Naive thymus-derived CD4-positive, alpha-beta T cell (primary cell): ENCODE measurements at regions of chr19 and their contacts with region 1.

Region 1: DNA sequence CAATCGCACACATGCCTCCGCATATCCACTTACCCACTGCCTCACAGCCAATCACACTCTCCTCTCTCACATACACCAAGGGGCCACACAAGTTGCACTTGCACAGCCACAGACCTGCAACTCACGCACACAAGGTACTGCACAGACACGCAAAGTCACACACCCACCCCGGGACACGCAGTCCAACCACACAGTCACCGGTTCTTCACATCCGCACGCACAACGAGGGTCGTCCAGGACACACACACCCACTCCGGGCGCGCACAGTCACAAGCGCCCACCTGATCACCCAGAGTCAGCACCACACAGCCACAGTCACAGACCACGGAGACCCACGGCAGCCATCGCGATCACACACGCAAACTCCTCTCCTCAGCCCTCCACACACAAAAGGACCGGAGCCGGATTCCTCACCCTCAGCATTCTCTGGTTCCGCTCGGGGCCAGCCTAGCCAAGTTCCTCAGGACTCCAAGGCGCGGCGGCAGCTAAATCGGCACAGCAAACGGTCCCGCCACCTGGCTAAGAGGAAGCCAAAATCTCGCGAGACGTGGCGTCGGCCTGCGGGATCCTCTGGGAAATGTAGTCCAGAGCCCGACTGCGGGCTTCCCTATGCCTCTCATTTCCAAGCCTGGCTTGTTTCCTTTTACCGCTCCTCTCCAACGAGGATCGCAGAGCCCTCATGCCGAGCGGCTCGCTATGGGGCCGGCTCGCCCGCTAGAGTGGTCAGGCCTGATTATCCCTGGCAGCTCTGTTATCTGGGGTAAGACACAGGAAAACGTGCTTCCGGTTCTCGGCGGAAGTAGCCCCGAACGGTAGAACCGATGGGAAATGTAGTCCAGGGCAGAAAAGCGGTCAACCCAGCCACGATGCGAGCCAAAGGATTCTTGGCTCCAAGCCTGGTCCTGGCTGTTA is at the start of gene ZNF850:
- DNase-seq: peak; percentile 88 to 97 (median 94)
- ATAC-seq: peak; percentile 94
- H3K4me3 ChIP-seq: peak within 1 kb of the TSS; percentile 97
- H3K4me3 Mint-ChIP-seq: peak within 1 kb of the TSS; percentile 88 to 98 (median 96)
- H3K27ac ChIP-seq: peak within 1 kb of the TSS; percentile 87
- H3K27ac Mint-ChIP-seq: peak within 1 kb of the TSS; percentile 82 to 98 (median 92)
- H3K4me1 ChIP-seq: peaks cover 12 to 15% of the 10 kb centered on the region in 2 donors
- H3K4me1 Mint-ChIP-seq: peaks cover 21 to 26% (median 24%) of the 10 kb centered on the region in 7 donors
- H3K27me3 ChIP-seq: no peaks in the 10 kb centered on the region
- H3K27me3 Mint-ChIP-seq: no peaks in the 10 kb centered on the region
- total RNA-seq, gene ZNF850: 1.9 to 4.8 (median 4.3) TPM

Region 2: GRCh38 chr19:36132489-36132891 is 640.1 kb before region 1 on chr19:
- CTCF ChIA-PET with region 1: no interaction called
- POLR2A ChIA-PET with region 1: no interaction called
- intact Hi-C with region 1: loop called in 1 of 2 experiments (anchors 5 kb)
- DNase-seq: no peak
- ATAC-seq: peak; percentile 50
- H3K4me3 ChIP-seq: no peak overlapping the region
- H3K4me3 Mint-ChIP-seq: peak overlapping the region in 2 of 10 donors; percentile 12 to 29
- H3K27ac ChIP-seq: no peak overlapping the region
- H3K27ac Mint-ChIP-seq: peak overlapping the region in 1 of 9 donors; percentile 80
- H3K4me1 ChIP-seq: no peaks in the 10 kb centered on the region
- H3K4me1 Mint-ChIP-seq: peaks cover 0 to 34% (median 5%) of the 10 kb centered on the region in 7 donors
- H3K27me3 ChIP-seq: no peaks in the 10 kb centered on the region
- H3K27me3 Mint-ChIP-seq: no peaks in the 10 kb centered on the region

Region 3: DNA sequence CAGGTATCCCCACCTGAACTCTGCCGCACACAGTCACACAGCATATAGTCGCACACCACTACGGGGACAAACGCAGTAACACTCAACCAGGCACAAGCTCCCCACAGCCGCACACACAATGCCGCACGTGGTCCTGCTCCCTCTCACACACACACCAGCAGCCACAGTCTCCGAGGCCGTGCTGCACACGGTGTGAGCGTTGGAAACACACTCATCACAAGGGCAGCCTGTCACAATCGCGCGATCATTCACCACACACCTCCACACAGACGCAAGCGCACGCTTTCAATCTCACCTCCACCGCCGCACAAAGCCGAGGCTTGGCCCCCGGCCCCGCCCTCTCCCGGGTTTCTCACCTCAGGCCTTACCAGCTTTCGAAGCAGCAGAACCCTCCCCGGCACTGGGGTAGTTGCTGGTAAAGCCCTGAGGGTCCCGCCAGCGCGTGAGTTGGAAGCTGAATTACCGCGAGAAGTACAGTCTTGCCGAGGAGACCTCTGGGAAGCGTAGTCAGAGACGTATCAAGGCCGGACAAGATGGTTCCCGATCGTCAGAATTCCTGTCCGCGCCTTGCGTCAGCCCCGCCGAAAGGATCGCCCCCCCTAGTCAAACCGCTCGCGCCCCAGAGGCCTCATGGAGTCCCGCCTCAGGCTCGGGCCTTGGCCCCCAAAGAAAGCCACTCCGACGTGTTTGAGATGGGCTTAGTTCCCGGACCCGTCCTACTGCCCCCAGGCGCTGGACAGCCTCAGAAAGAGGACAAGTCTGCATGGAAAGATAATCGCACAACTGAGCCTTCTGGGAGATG is 283.2 kb before region 1 on chr19 and contains the start of gene ZNF566:
- CTCF ChIA-PET with region 1: no interaction called
- POLR2A ChIA-PET with region 1: interaction called, 4 read pairs
- intact Hi-C with region 1: loop called (anchors 1 kb)
- DNase-seq: peak; percentile 74 to 98 (median 94)
- ATAC-seq: peak; percentile 95
- H3K4me3 ChIP-seq: peak within 1 kb of the TSS; percentile 97
- H3K4me3 Mint-ChIP-seq: peak within 1 kb of the TSS; percentile 93 to 99 (median 98)
- H3K27ac ChIP-seq: peak within 1 kb of the TSS; percentile 90
- H3K27ac Mint-ChIP-seq: peak within 1 kb of the TSS; percentile 93 to 99 (median 98)
- H3K4me1 ChIP-seq: peaks cover 9 to 10% of the 10 kb centered on the region in 2 donors
- H3K4me1 Mint-ChIP-seq: peaks cover 22 to 43% (median 30%) of the 10 kb centered on the region in 7 donors
- H3K27me3 ChIP-seq: no peaks in the 10 kb centered on the region
- H3K27me3 Mint-ChIP-seq: no peaks in the 10 kb centered on the region
- total RNA-seq, gene ZNF566: 9.2 to 29.8 (median 9.3) TPM

Region 4: GRCh38 chr19:36665832-36666231 is 106.7 kb before region 1 on chr19:
- CTCF ChIA-PET with region 1: no interaction called
- POLR2A ChIA-PET with region 1: no interaction called
- intact Hi-C with region 1: loop called (anchors 1 to 2 kb)
- DNase-seq: peak in 1 of 9 donors; percentile 2
- ATAC-seq: no peak
- H3K4me3 ChIP-seq: peak overlapping the region; percentile 88
- H3K4me3 Mint-ChIP-seq: peak overlapping the region; percentile 91 to 100 (median 98)
- H3K27ac ChIP-seq: no peak overlapping the region
- H3K27ac Mint-ChIP-seq: peak overlapping the region; percentile 29 to 99 (median 93)
- H3K4me1 ChIP-seq: peaks cover 0 to 10% of the 10 kb centered on the region in 2 donors
- H3K4me1 Mint-ChIP-seq: peaks cover 17 to 42% (median 35%) of the 10 kb centered on the region in 7 donors
- H3K27me3 ChIP-seq: no peaks in the 10 kb centered on the region
- H3K27me3 Mint-ChIP-seq: no peaks in the 10 kb centered on the region

Region 5: GRCh38 chr19:36805364-36805763 is 32.8 kb after region 1 on chr19:
- CTCF ChIA-PET with region 1: no interaction called
- POLR2A ChIA-PET with region 1: no interaction called
- intact Hi-C with region 1: no loop called
- DNase-seq: no peak
- ATAC-seq: no peak
- H3K4me3 ChIP-seq: no peak overlapping the region
- H3K4me3 Mint-ChIP-seq: peak overlapping the region in 1 of 10 donors; percentile 4
- H3K27ac ChIP-seq: no peak overlapping the region
- H3K27ac Mint-ChIP-seq: no peak overlapping the region
- H3K4me1 ChIP-seq: no peaks in the 10 kb centered on the region
- H3K4me1 Mint-ChIP-seq: no peaks in the 10 kb centered on the region
- H3K27me3 ChIP-seq: no peaks in the 10 kb centered on the region
- H3K27me3 Mint-ChIP-seq: no peaks in the 10 kb centered on the region

Region 6: GRCh38 chr19:36850559-36851442 is 78.2 kb after region 1 on chr19 and contains the start of gene ZNF345:
- CTCF ChIA-PET with region 1: no interaction called
- POLR2A ChIA-PET with region 1: interaction called, 8 read pairs
- intact Hi-C with region 1: loop called (anchors 1 kb)
- DNase-seq: peak; percentile 62 to 91 (median 88)
- ATAC-seq: peak; percentile 93
- H3K4me3 ChIP-seq: peak within 1 kb of the TSS; percentile 92
- H3K4me3 Mint-ChIP-seq: no peak within 1 kb of the TSS
- H3K27ac ChIP-seq: peak within 1 kb of the TSS; percentile 86
- H3K27ac Mint-ChIP-seq: no peak within 1 kb of the TSS
- H3K4me1 ChIP-seq: peaks cover 9 to 16% of the 10 kb centered on the region in 2 donors
- H3K4me1 Mint-ChIP-seq: peaks cover 0 to 22% (median 13%) of the 10 kb centered on the region in 7 donors
- H3K27me3 ChIP-seq: no peaks in the 10 kb centered on the region
- H3K27me3 Mint-ChIP-seq: no peaks in the 10 kb centered on the region
- total RNA-seq, gene ZNF345: 6.8 to 18.2 (median 7.8) TPM

Region 7: GRCh38 chr19:37172368-37173366 is 400.1 kb after region 1 on chr19 and contains the start of gene ZNF585A:
- CTCF ChIA-PET with region 1: no interaction called
- POLR2A ChIA-PET with region 1: no interaction called
- intact Hi-C with region 1: loop called (anchors 1 to 5 kb)
- DNase-seq: peak; percentile 68 to 92 (median 88)
- ATAC-seq: peak; percentile 100
- H3K4me3 ChIP-seq: peak within 1 kb of the TSS; percentile 90
- H3K4me3 Mint-ChIP-seq: peak within 1 kb of the TSS in 3 of 10 donors; percentile 36 to 73 (median 39)
- H3K27ac ChIP-seq: peak within 1 kb of the TSS; percentile 84
- H3K27ac Mint-ChIP-seq: no peak within 1 kb of the TSS
- H3K4me1 ChIP-seq: no peaks in the 10 kb centered on the region
- H3K4me1 Mint-ChIP-seq: peaks cover 0 to 16% (median 4%) of the 10 kb centered on the region in 7 donors
- H3K27me3 ChIP-seq: no peaks in the 10 kb centered on the region
- H3K27me3 Mint-ChIP-seq: no peaks in the 10 kb centered on the region
- total RNA-seq, gene ZNF585A: 3.5 to 24.3 (median 7.2) TPM

Region 8: GRCh38 chr19:37594304-37594981 is 821.9 kb after region 1 on chr19 and contains the starts of genes ZNF540 and ZNF571:
- CTCF ChIA-PET with region 1: no interaction called
- POLR2A ChIA-PET with region 1: interaction called, 4 read pairs
- intact Hi-C with region 1: loop called in 1 of 2 experiments (anchors 10 kb)
- DNase-seq: peak; percentile 70 to 95 (median 92)
- ATAC-seq: peak; percentile 96
- H3K4me3 ChIP-seq: peak within 1 kb of the TSS; percentile 80
- H3K4me3 Mint-ChIP-seq: peak within 1 kb of the TSS; percentile 94 to 100 (median 98)
- H3K27ac ChIP-seq: peak within 1 kb of the TSS; percentile 93
- H3K27ac Mint-ChIP-seq: peak within 1 kb of the TSS; percentile 93 to 100 (median 99)
- H3K4me1 ChIP-seq: peaks cover 7 to 18% of the 10 kb centered on the region in 2 donors
- H3K4me1 Mint-ChIP-seq: peaks cover 13 to 56% (median 39%) of the 10 kb centered on the region in 7 donors
- H3K27me3 ChIP-seq: no peaks in the 10 kb centered on the region
- H3K27me3 Mint-ChIP-seq: no peaks in the 10 kb centered on the region
- total RNA-seq, gene ZNF540: 0.99 to 22.7 (median 17.6) TPM
- total RNA-seq, gene ZNF571: 1.5 to 12.4 (median 9.0) TPM